PC-9 (cell line): ENCODE measurements at regions of chrX and their contacts with region 1.

Region 1: DNA sequence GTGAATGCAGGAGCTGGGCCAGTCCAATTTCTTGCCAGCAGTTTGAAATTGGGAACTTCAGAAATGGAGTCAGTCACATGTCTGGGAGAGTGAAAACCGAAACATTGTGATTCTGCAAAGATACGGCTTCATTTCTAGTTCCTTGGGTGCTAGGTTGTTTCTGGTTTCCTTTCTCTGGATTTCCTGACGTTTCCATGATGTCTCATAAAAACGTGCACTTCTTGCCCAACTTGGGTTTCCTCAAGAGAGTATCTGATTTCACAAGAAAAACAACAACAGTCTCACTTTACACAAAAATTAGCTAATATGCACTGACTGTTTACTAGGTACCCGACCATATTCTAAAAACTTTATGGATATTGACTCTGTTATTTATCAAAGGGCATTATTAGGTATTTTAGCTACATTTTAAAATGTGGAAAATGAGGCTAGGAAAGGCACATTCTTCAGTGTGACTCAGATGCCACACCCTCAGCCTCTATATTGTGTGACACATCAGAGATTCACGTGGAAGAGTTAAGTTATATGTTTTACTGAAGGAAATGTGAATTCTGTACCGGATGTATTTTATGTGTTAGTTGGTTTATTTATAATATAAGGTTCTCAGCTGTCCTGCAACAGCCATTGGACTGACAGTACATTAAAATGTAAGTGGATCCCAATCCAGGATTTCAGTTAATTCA is 225.0 kb upstream of the PUDP start:
- DNase-seq: peak in 1 of 2 experiments; percentile 66
- H3K4me3 ChIP-seq: no peak overlapping the region
- H3K27ac ChIP-seq: peak overlapping the region; percentile 86
- H3K4me1 ChIP-seq: peaks cover 7% of the 10 kb centered on the region; the same call in 1 of the 2 replicates
- H3K27me3 ChIP-seq: no peaks in the 10 kb centered on the region
- CTCF ChIP-seq: no peak

Region 2: DNA sequence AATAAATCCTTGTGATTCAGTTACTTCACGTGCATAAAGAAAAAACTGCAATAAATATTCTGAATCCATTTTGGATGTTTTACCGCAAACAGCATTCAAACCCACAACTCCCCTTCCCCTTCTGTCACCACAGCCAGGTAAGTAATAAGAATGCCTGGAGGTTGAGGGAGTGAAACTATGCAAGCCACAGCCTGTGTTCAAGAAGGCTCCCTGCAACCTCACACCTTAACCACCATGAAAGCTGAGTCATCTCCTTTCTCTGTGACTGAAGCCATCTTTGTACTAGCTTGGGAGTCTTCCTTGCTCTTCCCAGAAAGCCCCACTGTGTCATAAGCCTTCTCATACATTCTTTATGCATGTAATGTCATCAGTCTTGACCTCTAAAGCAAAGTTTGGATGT is 72.0 kb after region 1 on chrX:
- CTCF ChIA-PET with region 1: no interaction called
- POLR2A ChIA-PET with region 1: no interaction called
- intact Hi-C with region 1: loop called (anchors 5 kb)
- DNase-seq: peak in 1 of 2 experiments; percentile 1
- H3K4me3 ChIP-seq: no peak overlapping the region
- H3K27ac ChIP-seq: no peak overlapping the region
- H3K4me1 ChIP-seq: no peaks in the 10 kb centered on the region
- H3K27me3 ChIP-seq: no peaks in the 10 kb centered on the region
- CTCF ChIP-seq: no peak